ENCODE measurements at regions of chr5 and their contacts with region 1.

Region 1: DNA sequence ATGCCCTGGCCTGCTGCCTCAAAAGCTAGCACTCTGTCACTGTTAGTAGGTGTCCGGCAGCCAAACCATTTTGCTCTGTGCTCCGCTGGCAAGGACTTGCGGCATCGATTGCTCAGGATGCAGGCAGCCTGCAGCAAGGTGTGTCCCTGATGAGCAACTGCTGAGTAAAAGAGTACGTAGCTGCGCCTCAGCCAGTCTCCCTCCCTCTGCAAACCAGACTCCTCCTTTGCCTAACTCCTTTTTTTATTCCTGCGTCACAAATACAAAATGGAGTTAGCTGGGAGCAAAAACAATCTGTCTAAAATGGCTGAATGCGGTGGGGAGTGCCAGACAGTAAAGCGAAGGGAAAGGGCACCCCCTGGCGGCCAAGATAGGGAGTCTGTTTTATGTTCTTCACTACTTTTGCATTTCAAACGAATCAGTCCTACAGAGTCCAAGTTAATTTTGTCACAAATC is 61.1 kb downstream of the DIAPH1 start:
- DNase-seq: peak; percentile 55 to 89 (median 72)
- ATAC-seq: peak; percentile 88
- H3K4me3 ChIP-seq: no peak overlapping the region
- H3K4me3 Mint-ChIP-seq: no peak overlapping the region
- H3K27ac ChIP-seq: peak overlapping the region in 1 of 2 donors; percentile 20
- H3K27ac Mint-ChIP-seq: peak overlapping the region; percentile 71
- H3K4me1 ChIP-seq: peaks cover 19% of the 10 kb centered on the region
- H3K4me1 Mint-ChIP-seq: peaks cover 33% of the 10 kb centered on the region
- H3K27me3 ChIP-seq: no peaks in the 10 kb centered on the region
- H3K27me3 Mint-ChIP-seq: no peaks in the 10 kb centered on the region
- CTCF ChIP-seq: peak; percentile 88

Region 2: DNA sequence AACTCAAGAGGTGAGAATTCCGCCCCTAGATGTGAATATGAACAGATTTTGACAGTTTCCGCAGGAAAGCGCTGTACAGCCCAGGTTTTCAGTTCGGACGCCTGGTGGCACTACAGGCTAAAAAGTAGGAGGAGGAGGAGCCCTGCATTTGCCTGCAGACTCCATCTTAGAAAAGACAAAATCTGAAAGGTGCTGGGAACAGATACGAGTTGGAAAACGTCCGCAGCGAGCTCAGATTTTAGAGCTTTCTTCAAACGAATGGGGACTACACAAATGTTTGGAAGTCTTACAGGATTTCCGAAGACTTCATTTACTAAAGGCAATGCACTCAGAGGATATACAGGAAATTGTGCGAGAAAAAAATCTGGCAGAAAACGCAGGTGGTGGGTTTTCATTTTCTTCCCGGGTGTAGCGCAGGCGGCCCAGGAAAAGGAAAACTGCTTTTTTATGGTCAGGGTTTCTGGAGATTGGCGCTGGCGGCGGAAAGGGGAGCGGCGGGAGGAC is 473.2 kb before region 1 on chr5:
- CTCF ChIA-PET with region 1: no interaction called
- POLR2A ChIA-PET with region 1: no interaction called
- intact Hi-C with region 1: loop called (anchors 2 to 5 kb)
- DNase-seq: peak in 12 of 14 experiments; percentile 5 to 70 (median 30)
- ATAC-seq: peak; percentile 89
- H3K4me3 ChIP-seq: peak overlapping the region; percentile 50
- H3K4me3 Mint-ChIP-seq: peak overlapping the region; percentile 94
- H3K27ac ChIP-seq: no peak overlapping the region
- H3K27ac Mint-ChIP-seq: peak overlapping the region; percentile 50
- H3K4me1 ChIP-seq: peaks cover 2% of the 10 kb centered on the region
- H3K4me1 Mint-ChIP-seq: peaks cover 7% of the 10 kb centered on the region
- H3K27me3 ChIP-seq: peaks cover 0 to 5% of the 10 kb centered on the region in 2 experiments
- H3K27me3 Mint-ChIP-seq: peaks cover 64% of the 10 kb centered on the region
- CTCF ChIP-seq: peak; percentile 39

Region 3: GRCh38 chr5:141100240-141100805 is 457.4 kb before region 1 on chr5 and contains the start of gene PCDHB3:
- CTCF ChIA-PET with region 1: no interaction called
- POLR2A ChIA-PET with region 1: no interaction called
- intact Hi-C with region 1: no loop called
- DNase-seq: peak in 5 of 14 experiments; percentile 4 to 43 (median 23)
- ATAC-seq: no peak
- H3K4me3 ChIP-seq: no peak within 1 kb of the TSS
- H3K4me3 Mint-ChIP-seq: no peak within 1 kb of the TSS
- H3K27ac ChIP-seq: no peak within 1 kb of the TSS
- H3K27ac Mint-ChIP-seq: no peak within 1 kb of the TSS
- H3K4me1 ChIP-seq: no peaks in the 10 kb centered on the region
- H3K4me1 Mint-ChIP-seq: no peaks in the 10 kb centered on the region
- H3K27me3 ChIP-seq: peaks cover 23 to 29% of the 10 kb centered on the region in 2 experiments
- H3K27me3 Mint-ChIP-seq: peaks cover 56% of the 10 kb centered on the region
- CTCF ChIP-seq: no peak
- total RNA-seq, gene PCDHB3: not detected

Region 4: GRCh38 chr5:141223112-141223783 is 334.5 kb before region 1 on chr5 and contains the start of gene PCDHB14:
- CTCF ChIA-PET with region 1: no interaction called
- POLR2A ChIA-PET with region 1: no interaction called
- intact Hi-C with region 1: loop called (anchors 5 to 10 kb)
- DNase-seq: peak in 3 of 14 experiments; percentile 5 to 37 (median 31)
- ATAC-seq: no peak
- H3K4me3 ChIP-seq: no peak within 1 kb of the TSS
- H3K4me3 Mint-ChIP-seq: peak within 1 kb of the TSS; percentile 27
- H3K27ac ChIP-seq: no peak within 1 kb of the TSS
- H3K27ac Mint-ChIP-seq: no peak within 1 kb of the TSS
- H3K4me1 ChIP-seq: peaks cover 5% of the 10 kb centered on the region
- H3K4me1 Mint-ChIP-seq: no peaks in the 10 kb centered on the region
- H3K27me3 ChIP-seq: peaks cover 31 to 52% of the 10 kb centered on the region in 2 experiments
- H3K27me3 Mint-ChIP-seq: peaks cover 71% of the 10 kb centered on the region
- CTCF ChIP-seq: no peak
- total RNA-seq, gene PCDHB14: not detected

Region 5: GRCh38 chr5:141369994-141370848 is 187.5 kb before region 1 on chr5 and contains the start of gene PCDHGB3:
- CTCF ChIA-PET with region 1: interaction called, 13 read pairs
- POLR2A ChIA-PET with region 1: no interaction called
- intact Hi-C with region 1: no loop called
- DNase-seq: peak in 9 of 14 experiments; percentile 4 to 61 (median 28)
- ATAC-seq: peak; percentile 83
- H3K4me3 ChIP-seq: peak within 1 kb of the TSS; percentile 36
- H3K4me3 Mint-ChIP-seq: peak within 1 kb of the TSS; percentile 80
- H3K27ac ChIP-seq: no peak within 1 kb of the TSS
- H3K27ac Mint-ChIP-seq: no peak within 1 kb of the TSS
- H3K4me1 ChIP-seq: peaks cover 8% of the 10 kb centered on the region
- H3K4me1 Mint-ChIP-seq: peaks cover 11% of the 10 kb centered on the region
- H3K27me3 ChIP-seq: peaks cover 71 to 76% of the 10 kb centered on the region in 2 experiments
- H3K27me3 Mint-ChIP-seq: peaks cover 91% of the 10 kb centered on the region
- CTCF ChIP-seq: no peak
- total RNA-seq, gene PCDHGB3: 0.11 to 0.28 TPM

Region 6: GRCh38 chr5:141412854-141413539 is 144.7 kb before region 1 on chr5 and contains the start of gene PCDHGA10:
- CTCF ChIA-PET with region 1: interaction called, 5 read pairs
- POLR2A ChIA-PET with region 1: no interaction called
- intact Hi-C with region 1: loop called (anchors 2 to 5 kb)
- DNase-seq: peak in 13 of 14 experiments; percentile 26 to 72 (median 39)
- ATAC-seq: peak; percentile 88
- H3K4me3 ChIP-seq: peak within 1 kb of the TSS; percentile 53
- H3K4me3 Mint-ChIP-seq: peak within 1 kb of the TSS; percentile 92
- H3K27ac ChIP-seq: no peak within 1 kb of the TSS
- H3K27ac Mint-ChIP-seq: no peak within 1 kb of the TSS
- H3K4me1 ChIP-seq: peaks cover 15% of the 10 kb centered on the region
- H3K4me1 Mint-ChIP-seq: peaks cover 24% of the 10 kb centered on the region
- H3K27me3 ChIP-seq: peaks cover 63 to 84% of the 10 kb centered on the region in 2 experiments
- H3K27me3 Mint-ChIP-seq: peaks cover 82% of the 10 kb centered on the region
- CTCF ChIP-seq: peak; percentile 71
- total RNA-seq, gene PCDHGA10: 0.08 TPM in 1 of 2 experiments, not detected in the other

Region 7: GRCh38 chr5:141664732-141665461 is 107.2 kb after region 1 on chr5:
- CTCF ChIA-PET with region 1: no interaction called
- POLR2A ChIA-PET with region 1: no interaction called
- intact Hi-C with region 1: no loop called
- DNase-seq: peak; percentile 36 to 87 (median 70)
- ATAC-seq: peak; percentile 74
- H3K4me3 ChIP-seq: no peak overlapping the region
- H3K4me3 Mint-ChIP-seq: no peak overlapping the region
- H3K27ac ChIP-seq: no peak overlapping the region
- H3K27ac Mint-ChIP-seq: no peak overlapping the region
- H3K4me1 ChIP-seq: peaks cover 4% of the 10 kb centered on the region
- H3K4me1 Mint-ChIP-seq: no peaks in the 10 kb centered on the region
- H3K27me3 ChIP-seq: no peaks in the 10 kb centered on the region
- H3K27me3 Mint-ChIP-seq: no peaks in the 10 kb centered on the region
- CTCF ChIP-seq: peak; percentile 96

Measured in CD4-positive, alpha-beta T cell (primary cell).